ENCODE measurements at regions of chr22 and their contacts with region 1.

Region 1: DNA sequence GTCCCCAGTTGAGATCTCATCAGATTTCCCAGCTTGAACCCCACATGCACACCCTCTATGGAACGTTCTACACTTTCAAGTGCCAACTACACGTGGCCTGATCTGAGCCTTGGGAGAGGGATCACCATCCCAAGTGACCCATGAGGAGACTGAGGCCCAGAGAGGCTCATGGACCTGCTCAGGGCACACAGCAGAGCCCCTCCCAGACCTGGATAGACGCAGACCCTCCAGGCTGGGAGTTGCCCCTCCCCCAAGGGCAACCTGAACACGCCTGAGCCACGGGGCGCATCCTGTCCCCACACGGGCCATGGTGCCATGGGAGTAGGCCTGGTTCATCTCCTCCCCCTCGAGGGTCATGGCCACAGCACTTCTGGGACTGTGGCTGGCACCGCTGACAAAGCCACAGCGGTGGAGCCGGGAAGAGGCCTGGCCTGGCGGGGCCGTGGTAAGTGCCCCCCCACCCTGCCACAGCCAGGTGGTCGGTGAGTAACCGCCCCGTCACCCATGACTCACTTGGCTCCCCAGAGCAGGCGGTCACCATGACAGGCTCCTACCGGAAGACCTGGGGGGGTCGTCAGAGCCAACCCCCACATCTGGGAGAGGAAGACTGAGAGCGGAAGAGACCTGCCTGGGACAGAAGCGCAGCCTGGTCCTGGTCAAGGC is 8.1 kb downstream of the WNT7B start:
- DNase-seq: peak; percentile 12
- H3K4me3 ChIP-seq: no peak overlapping the region
- CTCF ChIP-seq: no peak

Region 2: DNA sequence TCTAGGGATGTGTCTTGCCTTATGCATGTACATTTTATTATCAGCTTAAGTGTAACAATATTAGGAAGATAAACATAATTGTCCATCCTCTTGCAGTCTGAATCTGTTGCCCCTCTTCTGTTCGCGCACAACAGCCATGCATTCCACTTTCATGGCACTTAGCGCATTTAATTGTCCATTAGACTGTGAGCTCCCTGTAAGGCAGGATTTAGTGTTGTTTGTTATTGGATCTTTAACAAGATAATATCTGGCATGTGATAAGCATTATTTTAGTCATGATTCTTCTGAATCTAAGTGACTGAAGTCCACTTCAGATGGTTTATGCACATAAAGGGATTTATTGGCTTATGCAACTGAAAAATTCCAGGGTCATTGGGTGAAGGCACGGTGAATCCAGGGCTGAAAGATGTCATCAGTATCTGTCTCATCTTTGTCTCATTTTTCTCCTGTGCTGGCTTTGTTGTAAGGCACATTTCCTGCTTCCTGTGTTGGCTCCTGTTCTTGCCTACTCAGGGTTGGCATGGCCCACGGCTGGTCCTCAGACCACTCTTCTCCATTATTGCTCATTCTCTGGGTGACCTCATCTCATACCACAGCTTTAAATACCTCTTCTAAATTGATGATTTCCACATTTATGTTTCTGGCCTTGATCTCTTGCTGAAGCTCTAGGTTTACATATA is 259.7 kb before region 1 on chr22:
- CTCF ChIA-PET with region 1: no interaction called
- POLR2A ChIA-PET with region 1: no interaction called
- DNase-seq: no peak
- H3K4me3 ChIP-seq: no peak overlapping the region
- CTCF ChIP-seq: no peak

Region 3: GRCh38 chr22:45957826-45958225 is 11.1 kb before region 1 on chr22:
- CTCF ChIA-PET with region 1: interaction called, 10 read pairs
- POLR2A ChIA-PET with region 1: no interaction called
- DNase-seq: no peak
- H3K4me3 ChIP-seq: no peak overlapping the region
- CTCF ChIP-seq: no peak

Region 4: GRCh38 chr22:46044621-46045438 is 75.9 kb after region 1 on chr22:
- CTCF ChIA-PET with region 1: no interaction called
- POLR2A ChIA-PET with region 1: no interaction called
- DNase-seq: no peak
- H3K4me3 ChIP-seq: peak overlapping the region; percentile 60
- CTCF ChIP-seq: no peak